ENCODE measurements at regions of chr10 and their contacts with region 1.

Region 1: DNA sequence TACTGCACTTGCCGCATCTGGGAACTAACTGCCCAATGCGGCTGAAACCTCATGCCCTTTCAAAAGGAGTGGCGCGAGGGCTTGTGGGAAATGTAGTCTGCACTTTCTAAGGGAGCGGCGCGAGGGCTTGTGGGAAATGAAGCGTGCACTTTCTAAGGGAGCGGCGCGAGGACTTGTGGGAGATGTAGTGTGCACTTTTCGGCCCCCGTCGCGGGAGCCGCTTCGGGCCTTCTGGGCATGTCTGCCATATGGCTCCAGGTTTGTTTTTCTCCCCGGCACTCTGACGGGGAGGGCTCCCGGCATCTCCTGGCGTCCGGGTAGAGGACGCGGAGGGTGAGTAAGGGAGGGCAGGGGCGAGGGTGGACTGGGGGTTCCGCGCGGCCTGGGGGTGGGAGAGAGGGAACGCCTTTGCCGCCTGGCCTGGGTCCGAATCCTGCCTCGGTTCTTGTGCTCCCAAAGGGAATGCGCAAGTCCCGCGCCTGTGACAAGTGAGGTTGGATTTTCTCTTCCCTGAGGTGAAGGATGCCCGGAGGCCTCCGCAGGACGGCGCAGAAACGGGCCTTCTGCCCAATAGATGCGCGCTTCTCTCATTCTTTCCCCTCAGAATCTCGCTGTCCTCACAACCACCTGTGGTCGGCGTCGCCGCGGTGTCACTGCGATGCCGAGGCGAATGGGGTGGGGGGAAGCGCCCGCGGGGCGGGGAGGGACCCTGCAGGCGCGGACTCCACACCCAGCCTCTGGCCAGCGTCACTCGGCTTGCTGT is at the start of gene ZNF37A:
- DNase-seq: peak; percentile 94
- ATAC-seq: peak; percentile 99
- total RNA-seq, gene ZNF37A: 32.8 TPM

Region 2: DNA sequence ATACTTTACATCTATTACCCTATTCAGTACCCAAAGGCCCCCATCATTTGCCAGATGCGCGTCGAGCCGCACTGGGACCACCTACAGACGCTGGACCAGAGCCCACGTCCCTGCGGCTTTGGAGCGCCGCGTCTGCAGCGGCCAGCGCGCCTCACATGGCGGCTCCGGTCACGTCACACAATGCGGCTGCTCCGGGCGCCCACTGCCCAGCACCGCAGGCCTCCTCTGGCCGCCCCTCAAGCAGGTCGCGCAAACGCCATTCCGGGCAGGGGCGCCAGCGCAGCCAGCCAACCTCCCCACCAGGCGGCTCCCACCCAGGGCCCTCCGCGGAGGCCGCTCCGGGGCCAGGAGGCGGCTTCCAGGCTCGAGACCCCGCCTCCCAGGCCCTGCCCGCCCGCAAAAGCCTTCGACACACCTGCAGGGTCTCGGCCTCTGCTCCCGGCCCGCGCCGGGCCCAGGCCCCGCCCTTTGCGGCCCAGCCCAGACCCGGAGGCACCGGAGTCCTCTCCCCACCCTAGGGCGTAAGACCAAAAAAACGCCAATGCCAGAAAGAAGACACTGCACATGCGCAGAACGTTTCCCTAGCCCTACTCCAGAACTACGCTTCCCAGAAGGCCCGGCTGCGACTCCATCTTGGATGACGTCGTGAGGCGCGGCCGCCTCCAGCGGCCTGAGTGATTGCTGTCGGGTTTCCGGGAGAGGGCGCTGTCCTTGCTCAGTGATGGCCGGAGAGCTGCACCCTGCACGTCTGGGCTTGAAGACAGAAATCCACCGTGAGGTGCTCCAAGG is 118.1 kb before region 1 on chr10 and contains the start of gene ZNF25:
- intact Hi-C with region 1: loop called (anchors 10 kb)
- DNase-seq: peak; percentile 99
- ATAC-seq: peak; percentile 99
- total RNA-seq, gene ZNF25: 21.0 TPM

Region 3: DNA sequence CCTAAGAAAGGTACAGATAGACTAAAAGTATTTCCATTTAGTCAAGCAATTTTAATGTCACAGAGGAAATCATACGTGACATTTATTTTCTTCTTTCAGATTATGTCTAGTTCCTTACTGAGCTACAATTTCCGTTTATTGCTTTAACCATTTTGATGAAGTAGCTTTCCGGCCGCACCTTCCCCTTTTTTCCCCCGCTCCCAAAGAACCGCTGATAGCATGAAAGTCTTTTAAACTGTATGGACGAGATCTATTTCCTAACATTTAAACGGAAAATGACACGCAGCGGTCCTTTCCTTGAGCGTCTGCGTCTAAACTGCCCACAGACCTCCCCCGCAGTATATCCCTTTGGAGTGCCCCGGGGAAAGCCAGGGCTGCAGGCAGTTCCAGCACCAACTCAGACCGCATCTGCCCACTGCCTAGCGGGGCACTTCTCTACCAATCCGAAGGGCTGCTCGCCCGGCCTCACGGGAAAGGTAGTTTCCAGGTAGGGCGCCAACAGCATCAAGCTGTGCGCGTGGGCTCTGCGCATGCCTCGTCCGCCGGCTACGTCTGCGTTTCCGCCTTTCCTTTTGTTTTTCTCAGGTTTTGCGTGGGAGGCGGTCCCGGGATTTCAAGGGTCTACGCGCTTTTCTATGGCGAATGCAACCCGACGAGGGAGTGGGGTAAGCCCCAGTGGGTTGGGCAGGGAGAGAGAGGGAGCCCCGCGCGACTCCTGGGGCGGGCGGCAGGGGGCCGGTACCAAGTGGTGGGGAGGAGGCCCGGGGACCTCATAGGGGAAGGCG is 84.0 kb before region 1 on chr10 and contains the start of gene ZNF33A:
- intact Hi-C with region 1: no loop called
- DNase-seq: peak; percentile 93
- ATAC-seq: peak; percentile 94
- total RNA-seq, gene ZNF33A: 32.5 TPM

Measured in sciatic nerve (tissue), 2 donors.